ENCODE measurements at regions of chr13 and their contacts with region 1.

Region 1: GRCh38 chr13:112457485-112457884 is 81.3 kb downstream of the SPACA7 start:
- DNase-seq: no peak
- ATAC-seq: no peak
- H3K4me3 ChIP-seq: no peak overlapping the region
- H3K27ac ChIP-seq: no peak overlapping the region
- H3K4me1 ChIP-seq: peaks cover 0 to 6% of the 10 kb centered on the region in 2 experiments; a peak in 1 of 5 replicates
- H3K27me3 ChIP-seq: peaks cover 14 to 43% of the 10 kb centered on the region in 2 experiments; a peak in 4 of 5 replicates
- CTCF ChIP-seq: no peak
- EP300 ChIP-seq: no peak
- POLR2A ChIP-seq: no peak
- RAD21 ChIP-seq: no peak

Region 2: GRCh38 chr13:111789420-111789819 is 668.1 kb before region 1 on chr13:
- CTCF ChIA-PET with region 1: no interaction called
- POLR2A ChIA-PET with region 1: no interaction called
- in situ Hi-C with region 1: no loop called
- intact Hi-C with region 1: no loop called
- DNase-seq: no peak
- ATAC-seq: no peak
- H3K4me3 ChIP-seq: no peak overlapping the region
- H3K27ac ChIP-seq: no peak overlapping the region
- H3K4me1 ChIP-seq: no peaks in the 10 kb centered on the region
- H3K27me3 ChIP-seq: no peaks in the 10 kb centered on the region
- CTCF ChIP-seq: no peak
- EP300 ChIP-seq: no peak
- POLR2A ChIP-seq: no peak
- RAD21 ChIP-seq: no peak

Region 3: DNA sequence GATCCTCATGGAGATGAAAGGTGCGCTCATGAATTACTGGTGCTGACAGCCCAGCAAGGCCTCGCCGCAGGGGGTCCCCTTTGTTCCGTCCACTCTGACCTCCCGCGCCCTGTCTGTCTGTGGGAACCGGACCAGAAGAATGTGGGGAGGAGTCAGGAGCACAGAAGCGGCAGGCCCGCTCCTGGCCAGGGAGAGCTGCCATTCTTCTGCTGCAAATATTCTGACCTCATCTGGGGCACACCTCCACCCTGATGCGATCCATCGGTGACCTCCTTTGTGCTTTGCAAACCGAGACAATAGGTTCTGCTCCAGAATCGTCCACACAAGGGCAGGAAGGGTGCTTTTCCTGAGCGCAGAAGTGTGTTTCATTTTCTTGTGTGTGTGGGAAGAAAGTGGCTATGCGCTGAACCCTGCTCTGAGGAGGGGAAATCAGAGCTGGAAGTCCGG is 252.6 kb before region 1 on chr13:
- CTCF ChIA-PET with region 1: no interaction called
- POLR2A ChIA-PET with region 1: no interaction called
- in situ Hi-C with region 1: no loop called
- intact Hi-C with region 1: no loop called
- DNase-seq: no peak
- ATAC-seq: no peak
- H3K4me3 ChIP-seq: no peak overlapping the region
- H3K27ac ChIP-seq: no peak overlapping the region
- H3K4me1 ChIP-seq: no peaks in the 10 kb centered on the region
- H3K27me3 ChIP-seq: peaks cover 0 to 44% of the 10 kb centered on the region in 2 experiments; a peak in 3 of 5 replicates
- CTCF ChIP-seq: no peak
- EP300 ChIP-seq: no peak
- POLR2A ChIP-seq: no peak
- RAD21 ChIP-seq: no peak

Region 4: DNA sequence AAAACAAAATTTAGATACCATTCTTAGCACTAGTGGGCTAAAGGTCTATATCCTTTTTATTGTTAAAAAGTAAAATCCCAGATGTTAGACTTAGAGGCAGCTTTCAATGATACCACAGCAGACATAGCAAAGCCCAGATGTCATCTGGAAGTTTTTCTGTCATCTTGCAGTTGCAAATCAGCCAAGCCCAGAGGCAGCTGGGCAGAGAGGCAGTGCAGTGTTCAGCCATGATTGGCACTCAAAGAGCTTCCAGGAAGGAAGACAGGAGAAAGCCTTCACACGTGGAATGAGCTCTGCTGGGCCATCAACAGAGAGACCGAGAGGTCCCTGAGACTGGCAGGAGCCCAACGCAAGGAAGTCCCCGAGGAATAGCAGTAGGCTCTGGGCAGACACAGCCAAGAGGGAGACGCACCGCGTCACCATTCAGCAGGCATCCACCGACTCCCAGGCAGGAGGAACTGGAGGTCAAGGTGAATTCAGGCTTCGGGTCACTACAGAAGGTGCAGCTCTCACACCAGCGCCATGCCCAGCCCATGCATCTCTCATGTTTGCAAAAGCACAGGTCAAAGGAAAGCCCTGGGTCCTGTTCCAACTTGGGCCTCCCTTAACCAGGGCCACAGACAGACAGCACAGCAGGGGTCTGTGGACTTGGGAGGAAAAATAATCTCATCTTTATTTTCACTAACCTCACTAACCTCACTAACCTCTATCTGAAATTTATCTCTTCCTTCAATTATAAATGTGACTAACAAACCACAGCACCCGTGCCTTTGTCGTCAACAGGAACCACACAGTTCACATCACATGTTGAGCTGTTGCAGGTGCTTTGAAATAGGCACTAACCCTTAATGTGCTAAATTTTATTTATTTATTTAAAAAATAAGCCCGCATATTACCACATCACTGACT is 75.6 kb after region 1 on chr13:
- CTCF ChIA-PET with region 1: no interaction called
- POLR2A ChIA-PET with region 1: no interaction called
- in situ Hi-C with region 1: no loop called
- intact Hi-C with region 1: loop called (anchors 2 kb)
- DNase-seq: no peak
- ATAC-seq: no peak; the same call in 2 of the 3 replicates
- H3K4me3 ChIP-seq: no peak overlapping the region
- H3K27ac ChIP-seq: no peak overlapping the region
- H3K4me1 ChIP-seq: no peaks in the 10 kb centered on the region
- H3K27me3 ChIP-seq: no peaks in the 10 kb centered on the region
- CTCF ChIP-seq: no peak
- EP300 ChIP-seq: no peak
- POLR2A ChIP-seq: no peak
- RAD21 ChIP-seq: no peak

Region 5: DNA sequence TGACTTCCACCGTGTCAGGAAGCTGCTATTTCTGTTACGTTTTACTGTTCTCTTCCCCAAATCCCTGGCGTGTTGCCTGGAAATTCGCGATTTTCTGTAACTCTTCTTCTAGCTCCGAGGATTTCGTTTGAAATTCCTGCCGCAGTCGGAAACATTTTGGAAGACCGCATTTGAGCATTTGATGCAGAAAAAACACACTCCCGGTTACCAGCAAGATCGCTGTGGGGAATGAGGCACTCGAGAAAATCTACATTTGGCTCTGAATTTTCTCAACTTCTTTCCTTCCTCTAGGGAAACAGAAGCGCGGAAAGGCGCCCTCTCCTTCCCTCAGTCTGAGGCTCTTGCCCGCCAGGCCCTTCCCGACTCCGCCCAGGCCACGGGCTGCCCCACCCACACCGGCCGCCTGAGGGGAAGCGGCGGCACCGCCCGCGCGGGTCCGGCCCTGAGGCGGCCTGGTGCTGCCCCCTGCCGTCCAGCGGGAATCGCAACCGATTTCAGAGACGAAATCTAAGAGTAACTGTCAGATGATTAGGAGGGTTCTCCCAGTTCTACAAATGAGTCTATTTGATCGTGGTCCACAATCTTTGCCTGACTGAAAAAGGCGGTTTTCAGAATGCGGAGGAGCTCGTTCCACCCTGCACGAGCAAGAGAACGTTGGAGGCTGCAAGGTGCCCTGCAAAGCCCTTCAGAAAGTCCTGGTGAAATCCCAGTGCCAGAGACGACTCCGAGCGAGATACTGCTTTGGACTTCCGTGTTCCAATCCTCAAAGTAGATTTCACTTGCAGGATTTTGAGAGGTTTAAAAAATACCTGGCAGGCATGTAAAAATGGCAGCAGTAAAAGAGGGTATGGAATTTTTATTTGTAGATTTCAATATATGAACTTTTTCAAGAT is 148.9 kb after region 1 on chr13:
- CTCF ChIA-PET with region 1: no interaction called
- POLR2A ChIA-PET with region 1: interaction called, 3 read pairs
- in situ Hi-C with region 1: no loop called
- intact Hi-C with region 1: loop called (anchors 5 kb)
- DNase-seq: peak; percentile 88 to 93 (median 91)
- ATAC-seq: peak; percentile 100
- H3K4me3 ChIP-seq: peak overlapping the region; percentile 34
- H3K27ac ChIP-seq: no peak overlapping the region
- H3K4me1 ChIP-seq: peaks cover 0 to 5% of the 10 kb centered on the region in 2 experiments; a peak in 1 of 5 replicates
- H3K27me3 ChIP-seq: peaks cover 6 to 7% of the 10 kb centered on the region in 2 experiments; a peak in 4 of 5 replicates
- CTCF ChIP-seq: peak; percentile 85 to 88 (median 86)
- EP300 ChIP-seq: no peak
- POLR2A ChIP-seq: no peak
- RAD21 ChIP-seq: peak; percentile 89

Measured in K562 (cell line).